ENCODE measurements at regions of chr13 and their contacts with region 1.

Region 1: GRCh38 chr13:30408319-30409101 is 13.8 kb upstream of the UBE2L5 start:
- DNase-seq: no peak
- H3K4me3 ChIP-seq: peak overlapping the region; percentile 37
- CTCF ChIP-seq: peak; percentile 86

Region 2: DNA sequence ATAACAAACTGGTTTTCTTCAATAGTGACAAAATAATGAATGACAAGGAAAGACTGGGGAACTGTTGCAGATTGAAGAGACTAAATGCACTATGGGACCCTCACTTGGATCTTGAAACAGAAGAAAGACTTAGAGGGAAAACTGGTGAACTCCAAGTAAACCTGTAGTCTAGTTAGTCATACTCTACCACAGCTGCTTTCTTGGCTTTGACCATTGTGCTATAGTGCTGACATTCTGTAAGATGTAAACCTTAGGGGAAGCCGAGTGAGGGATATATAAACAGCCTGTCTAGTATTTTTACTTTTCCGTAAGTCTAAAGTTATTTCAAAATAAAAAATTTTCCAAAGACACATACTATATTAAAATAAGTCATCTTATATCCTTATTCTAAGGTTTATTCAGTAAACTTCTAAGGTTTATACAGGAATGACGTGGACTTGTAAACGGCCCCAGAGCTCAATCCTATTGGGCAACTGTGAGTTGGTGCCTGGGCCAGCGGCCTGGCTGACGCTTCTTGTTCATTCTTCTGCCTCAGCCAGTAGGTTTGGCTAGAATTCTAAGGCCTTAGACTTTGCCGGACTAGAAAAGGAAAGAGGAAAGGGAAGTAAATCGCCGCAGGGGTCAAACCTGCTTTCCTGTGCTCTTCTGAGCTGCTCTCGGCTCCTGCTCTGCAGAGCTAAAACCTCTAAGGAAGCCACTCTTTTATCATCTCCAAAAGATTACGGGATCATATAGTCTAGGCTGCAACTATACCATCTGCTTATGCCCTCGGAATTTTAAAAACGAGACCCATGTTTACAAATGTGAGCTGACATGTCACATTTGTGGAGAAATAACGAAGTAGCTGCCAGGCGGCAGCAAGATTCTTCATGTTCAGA is 19.9 kb before region 1 on chr13:
- CTCF ChIA-PET with region 1: interaction called, 10 read pairs
- POLR2A ChIA-PET with region 1: no interaction called
- DNase-seq: no peak
- H3K4me3 ChIP-seq: no peak overlapping the region
- CTCF ChIP-seq: no peak

Region 3: DNA sequence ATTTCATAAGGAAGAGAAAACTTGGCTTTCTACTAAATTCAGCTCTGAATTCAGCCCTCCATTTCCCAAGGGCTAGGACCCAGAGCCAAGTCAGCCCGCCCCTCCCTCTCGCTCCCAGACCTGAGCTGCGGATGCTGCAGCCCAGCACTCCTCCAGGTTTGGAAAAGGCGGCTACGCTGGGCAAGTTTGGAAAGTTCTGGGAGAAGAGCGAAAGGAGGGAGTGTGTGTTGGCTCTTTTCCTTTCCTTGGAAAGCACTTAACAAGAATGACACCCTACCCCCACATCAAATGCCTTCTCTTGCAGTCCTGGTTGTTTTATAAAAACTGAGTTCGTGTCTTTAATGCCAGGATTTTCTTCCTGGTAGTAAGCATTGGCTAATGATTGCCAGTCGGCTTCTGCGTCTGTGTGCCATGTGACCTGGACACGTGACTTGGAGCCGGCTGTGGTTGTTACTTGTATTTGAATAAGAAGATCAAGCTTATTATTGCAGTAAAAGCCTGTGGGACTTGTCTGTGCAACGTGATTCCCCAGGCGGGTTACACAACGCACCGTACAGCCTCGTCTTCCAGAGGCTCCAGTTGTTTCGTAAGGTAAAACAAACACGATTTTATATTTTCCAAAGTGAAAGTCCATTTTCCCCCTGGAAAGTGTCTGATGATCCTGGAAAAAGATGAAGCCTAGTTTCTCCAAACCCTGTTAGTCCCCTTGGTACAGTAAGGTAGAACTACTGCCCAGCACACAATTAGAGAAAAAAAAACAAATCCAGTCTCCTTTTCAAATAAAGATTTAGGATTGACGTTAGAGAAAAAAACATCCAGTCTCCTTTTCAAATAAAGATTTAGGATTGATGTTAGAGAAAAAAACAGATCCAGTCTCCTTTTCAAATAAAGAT is 13.1 kb before region 1 on chr13:
- CTCF ChIA-PET with region 1: interaction called, 27 read pairs
- POLR2A ChIA-PET with region 1: interaction called, 4 read pairs
- DNase-seq: peak; percentile 83
- H3K4me3 ChIP-seq: peak overlapping the region; percentile 53
- CTCF ChIP-seq: no peak

Measured in AG04449 (cell line).